Naive thymus-derived CD4-positive, alpha-beta T cell (primary cell): ENCODE measurements at regions of chr14 and their contacts with region 1.

Region 1: DNA sequence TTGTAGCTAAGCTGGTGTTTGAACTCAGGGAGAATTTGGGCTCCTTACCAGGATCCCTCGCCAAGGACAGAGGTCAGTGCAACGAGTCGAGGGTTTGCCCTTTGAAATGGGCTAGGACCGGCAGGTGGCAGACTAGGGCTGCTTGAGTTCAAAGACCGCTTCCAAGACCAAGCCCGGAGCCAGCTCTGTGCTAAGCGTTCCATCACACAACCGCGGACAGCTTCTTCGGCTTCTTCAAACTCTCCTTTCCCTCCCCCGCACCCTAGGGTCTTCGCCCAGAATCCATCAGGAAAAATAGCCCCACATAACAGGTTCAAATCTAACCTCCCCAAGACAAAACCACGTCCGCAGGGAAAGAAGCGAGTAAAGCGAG is 705 bp upstream of the FLVCR2 start:
- DNase-seq: peak; percentile 45 to 71 (median 54)
- ATAC-seq: peak; percentile 92
- H3K4me3 ChIP-seq: peak overlapping the region; percentile 64
- H3K4me3 Mint-ChIP-seq: peak overlapping the region in 5 of 10 donors; percentile 90 to 96 (median 93)
- H3K27ac ChIP-seq: peak overlapping the region; percentile 41
- H3K27ac Mint-ChIP-seq: peak overlapping the region; percentile 34 to 86 (median 75)
- H3K4me1 ChIP-seq: peaks cover 9 to 12% of the 10 kb centered on the region in 2 donors
- H3K4me1 Mint-ChIP-seq: peaks cover 6 to 19% (median 9%) of the 10 kb centered on the region in 7 donors
- H3K27me3 ChIP-seq: no peaks in the 10 kb centered on the region
- H3K27me3 Mint-ChIP-seq: peaks cover 0 to 8% (median 0%) of the 10 kb centered on the region in 5 donors

Region 2: GRCh38 chr14:75566321-75566720 is 11.4 kb before region 1 on chr14:
- CTCF ChIA-PET with region 1: interaction called, 5 read pairs
- POLR2A ChIA-PET with region 1: no interaction called
- intact Hi-C with region 1: loop called in 1 of 2 experiments (anchors 1 kb)
- DNase-seq: peak in 7 of 9 donors; percentile 41 to 78 (median 63)
- ATAC-seq: peak; percentile 91
- H3K4me3 ChIP-seq: no peak overlapping the region
- H3K4me3 Mint-ChIP-seq: peak overlapping the region in 7 of 10 donors; percentile 7 to 61 (median 45)
- H3K27ac ChIP-seq: peak overlapping the region; percentile 22
- H3K27ac Mint-ChIP-seq: peak overlapping the region; percentile 69 to 96 (median 87)
- H3K4me1 ChIP-seq: peaks cover 3 to 6% of the 10 kb centered on the region in 2 donors
- H3K4me1 Mint-ChIP-seq: peaks cover 13 to 53% (median 34%) of the 10 kb centered on the region in 7 donors
- H3K27me3 ChIP-seq: no peaks in the 10 kb centered on the region
- H3K27me3 Mint-ChIP-seq: no peaks in the 10 kb centered on the region

Region 3: GRCh38 chr14:75654127-75654732 is 76.5 kb after region 1 on chr14:
- CTCF ChIA-PET with region 1: interaction called, 133 read pairs
- POLR2A ChIA-PET with region 1: interaction called, 13 read pairs
- intact Hi-C with region 1: loop called (anchors 1 kb)
- DNase-seq: peak; percentile 60 to 83 (median 71)
- ATAC-seq: peak; percentile 97
- H3K4me3 ChIP-seq: no peak overlapping the region
- H3K4me3 Mint-ChIP-seq: no peak overlapping the region
- H3K27ac ChIP-seq: peak overlapping the region; percentile 14
- H3K27ac Mint-ChIP-seq: peak overlapping the region in 1 of 9 donors; percentile 20
- H3K4me1 ChIP-seq: no peaks in the 10 kb centered on the region
- H3K4me1 Mint-ChIP-seq: peaks cover 5 to 17% (median 10%) of the 10 kb centered on the region in 7 donors
- H3K27me3 ChIP-seq: no peaks in the 10 kb centered on the region
- H3K27me3 Mint-ChIP-seq: no peaks in the 10 kb centered on the region

Region 4: GRCh38 chr14:75794615-75795038 is 216.9 kb after region 1 on chr14:
- CTCF ChIA-PET with region 1: no interaction called
- POLR2A ChIA-PET with region 1: no interaction called
- intact Hi-C with region 1: loop called in 1 of 2 experiments (anchors 5 kb)
- DNase-seq: no peak
- ATAC-seq: no peak
- H3K4me3 ChIP-seq: no peak overlapping the region
- H3K4me3 Mint-ChIP-seq: no peak overlapping the region
- H3K27ac ChIP-seq: no peak overlapping the region
- H3K27ac Mint-ChIP-seq: no peak overlapping the region
- H3K4me1 ChIP-seq: no peaks in the 10 kb centered on the region
- H3K4me1 Mint-ChIP-seq: no peaks in the 10 kb centered on the region
- H3K27me3 ChIP-seq: no peaks in the 10 kb centered on the region
- H3K27me3 Mint-ChIP-seq: no peaks in the 10 kb centered on the region